Aorta (tissue), 5 donors: ENCODE measurements at regions of chrX and their contacts with region 1.

Region 1: GRCh38 chrX:102712952-102713625 is 841 bp downstream of the GPRASP2 start:
- DNase-seq: peak in 1 of 2 donors; percentile 68
- ATAC-seq: peak; percentile 81
- H3K4me3 ChIP-seq: peak overlapping the region; percentile 13 to 50
- H3K27ac ChIP-seq: peak overlapping the region in 1 of 2 donors; percentile 66
- H3K4me1 ChIP-seq: no peaks in the 10 kb centered on the region
- H3K27me3 ChIP-seq: no peaks in the 10 kb centered on the region

Region 2: DNA sequence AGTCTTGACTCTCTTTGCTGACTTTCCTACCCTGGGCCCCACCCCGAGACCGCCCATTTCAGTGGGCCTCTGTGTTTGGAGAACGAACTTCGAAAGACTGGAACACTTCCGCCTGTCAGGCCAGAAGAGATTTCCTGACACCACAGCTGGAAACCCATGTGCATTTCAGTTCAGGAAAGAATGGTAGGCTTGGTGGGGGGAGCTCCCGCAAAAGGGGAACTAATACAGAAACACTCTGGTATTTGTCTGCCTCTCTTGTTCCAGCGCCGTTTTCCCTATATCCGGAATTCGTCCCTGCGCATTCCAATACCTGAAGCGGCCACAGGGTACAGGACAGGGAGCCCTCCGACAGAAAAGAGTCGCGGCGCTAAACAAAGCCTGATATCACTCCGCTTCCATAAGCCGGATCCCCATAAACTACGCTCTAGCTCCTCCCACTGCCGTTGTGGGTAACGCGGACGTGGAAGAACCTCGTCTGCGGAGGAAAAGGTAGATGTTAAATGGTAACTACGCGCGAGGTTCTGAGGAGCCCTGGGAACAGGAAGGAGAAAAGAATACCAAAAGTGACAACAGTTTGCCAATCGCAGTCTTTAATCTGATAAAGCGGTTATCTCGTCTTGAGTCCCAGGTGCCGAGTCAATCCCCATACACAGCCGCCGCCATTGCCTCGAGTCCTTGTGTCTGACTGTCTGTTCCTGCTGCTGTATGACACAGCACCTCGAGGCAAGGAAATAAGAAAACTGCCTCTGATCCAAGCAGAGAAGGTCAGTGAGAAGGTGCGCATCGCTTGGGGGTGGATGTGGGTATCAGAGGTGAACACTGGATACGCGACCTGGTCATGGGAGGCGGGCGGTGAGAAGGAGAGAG is 113.8 kb before region 1 on chrX and contains the start of gene ARMCX5:
- intact Hi-C with region 1: loop called (anchors 2 to 10 kb)
- DNase-seq: peak; percentile 81
- ATAC-seq: peak; percentile 93
- H3K4me3 ChIP-seq: peak within 1 kb of the TSS; percentile 39 to 93
- H3K27ac ChIP-seq: peak within 1 kb of the TSS; percentile 23 to 97
- H3K4me1 ChIP-seq: no peaks in the 10 kb centered on the region
- H3K27me3 ChIP-seq: no peaks in the 10 kb centered on the region
- total RNA-seq, gene ARMCX5: 7.3 to 9.7 TPM

Region 3: GRCh38 chrX:102652031-102652688 is 60.9 kb before region 1 on chrX:
- intact Hi-C with region 1: loop called in 1 of 2 experiments (anchors 5 kb)
- DNase-seq: peak; percentile 57 to 73
- ATAC-seq: peak; percentile 72
- H3K4me3 ChIP-seq: peak overlapping the region; percentile 32 to 69
- H3K27ac ChIP-seq: peak overlapping the region in 1 of 2 donors; percentile 26
- H3K4me1 ChIP-seq: no peaks in the 10 kb centered on the region
- H3K27me3 ChIP-seq: no peaks in the 10 kb centered on the region

Region 4: GRCh38 chrX:102672856-102673255 is 40.2 kb before region 1 on chrX:
- intact Hi-C with region 1: no loop called
- DNase-seq: peak in 1 of 2 donors; percentile 36
- ATAC-seq: no peak
- H3K4me3 ChIP-seq: no peak overlapping the region
- H3K27ac ChIP-seq: no peak overlapping the region
- H3K4me1 ChIP-seq: no peaks in the 10 kb centered on the region
- H3K27me3 ChIP-seq: no peaks in the 10 kb centered on the region

Region 5: GRCh38 chrX:102768987-102769761 is 56.1 kb after region 1 on chrX:
- intact Hi-C with region 1: loop called in 1 of 2 experiments (anchors 10 kb)
- DNase-seq: peak; percentile 74 to 78
- ATAC-seq: peak; percentile 83
- H3K4me3 ChIP-seq: peak overlapping the region; percentile 29 to 92
- H3K27ac ChIP-seq: no peak overlapping the region
- H3K4me1 ChIP-seq: peaks cover 0 to 3% of the 10 kb centered on the region in 2 donors
- H3K27me3 ChIP-seq: no peaks in the 10 kb centered on the region

Region 6: DNA sequence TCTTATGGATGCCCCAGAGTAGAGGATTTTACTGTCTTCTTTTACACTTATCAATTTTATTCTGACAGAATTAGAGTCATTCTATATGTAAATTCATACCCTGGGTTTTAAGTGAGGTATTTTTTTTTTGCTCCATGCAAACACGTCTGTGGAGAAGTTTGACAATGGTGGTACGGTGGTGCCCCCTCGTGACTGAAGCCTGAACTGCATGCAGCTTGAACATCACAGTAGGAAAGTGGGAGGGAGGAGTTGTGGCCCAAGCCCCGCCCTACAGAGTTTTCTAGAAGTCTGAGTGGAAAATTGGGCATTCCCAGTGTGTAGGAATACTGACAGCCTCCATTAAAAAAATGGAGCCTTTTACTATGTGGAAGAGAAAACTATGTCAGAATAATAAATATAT is 150.6 kb after region 1 on chrX:
- intact Hi-C with region 1: loop called in 1 of 2 experiments (anchors 5 kb)
- DNase-seq: peak; percentile 86 to 94
- ATAC-seq: peak; percentile 91
- H3K4me3 ChIP-seq: no peak overlapping the region
- H3K27ac ChIP-seq: no peak overlapping the region
- H3K4me1 ChIP-seq: no peaks in the 10 kb centered on the region
- H3K27me3 ChIP-seq: no peaks in the 10 kb centered on the region

Region 7: DNA sequence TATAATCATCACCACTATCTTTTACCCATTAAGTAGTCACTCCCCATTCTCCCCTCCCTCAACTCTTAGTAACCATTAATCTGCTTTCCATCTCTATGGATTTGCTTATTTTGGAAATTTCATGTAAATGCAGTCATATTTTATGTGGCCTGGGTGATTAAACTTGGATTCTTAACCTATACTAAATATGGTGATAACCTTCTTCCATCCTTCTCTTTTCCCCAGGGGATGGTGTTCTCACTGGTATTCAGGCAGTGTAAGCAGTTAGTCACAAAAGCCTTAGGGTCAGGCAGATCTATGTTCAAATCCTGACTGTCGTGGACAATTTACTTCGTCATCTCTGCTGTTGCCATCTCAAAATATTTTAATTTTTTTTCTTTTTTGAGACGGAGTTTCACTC is 253.6 kb after region 1 on chrX:
- intact Hi-C with region 1: no loop called
- DNase-seq: no peak
- ATAC-seq: no peak
- H3K4me3 ChIP-seq: no peak overlapping the region
- H3K27ac ChIP-seq: no peak overlapping the region
- H3K4me1 ChIP-seq: no peaks in the 10 kb centered on the region
- H3K27me3 ChIP-seq: no peaks in the 10 kb centered on the region